ENCODE measurements at regions of chr16 and their contacts with region 1.

Region 1: GRCh38 chr16:65671-66137 is 6.7 kb downstream of the RHBDF1 start:
- DNase-seq: peak; percentile 89
- ATAC-seq: peak; percentile 92
- H3K4me3 Mint-ChIP-seq: no peak overlapping the region
- H3K27ac Mint-ChIP-seq: no peak overlapping the region
- H3K4me1 Mint-ChIP-seq: no peaks in the 10 kb centered on the region
- H3K27me3 Mint-ChIP-seq: peaks cover 8% of the 10 kb centered on the region

Region 2: DNA sequence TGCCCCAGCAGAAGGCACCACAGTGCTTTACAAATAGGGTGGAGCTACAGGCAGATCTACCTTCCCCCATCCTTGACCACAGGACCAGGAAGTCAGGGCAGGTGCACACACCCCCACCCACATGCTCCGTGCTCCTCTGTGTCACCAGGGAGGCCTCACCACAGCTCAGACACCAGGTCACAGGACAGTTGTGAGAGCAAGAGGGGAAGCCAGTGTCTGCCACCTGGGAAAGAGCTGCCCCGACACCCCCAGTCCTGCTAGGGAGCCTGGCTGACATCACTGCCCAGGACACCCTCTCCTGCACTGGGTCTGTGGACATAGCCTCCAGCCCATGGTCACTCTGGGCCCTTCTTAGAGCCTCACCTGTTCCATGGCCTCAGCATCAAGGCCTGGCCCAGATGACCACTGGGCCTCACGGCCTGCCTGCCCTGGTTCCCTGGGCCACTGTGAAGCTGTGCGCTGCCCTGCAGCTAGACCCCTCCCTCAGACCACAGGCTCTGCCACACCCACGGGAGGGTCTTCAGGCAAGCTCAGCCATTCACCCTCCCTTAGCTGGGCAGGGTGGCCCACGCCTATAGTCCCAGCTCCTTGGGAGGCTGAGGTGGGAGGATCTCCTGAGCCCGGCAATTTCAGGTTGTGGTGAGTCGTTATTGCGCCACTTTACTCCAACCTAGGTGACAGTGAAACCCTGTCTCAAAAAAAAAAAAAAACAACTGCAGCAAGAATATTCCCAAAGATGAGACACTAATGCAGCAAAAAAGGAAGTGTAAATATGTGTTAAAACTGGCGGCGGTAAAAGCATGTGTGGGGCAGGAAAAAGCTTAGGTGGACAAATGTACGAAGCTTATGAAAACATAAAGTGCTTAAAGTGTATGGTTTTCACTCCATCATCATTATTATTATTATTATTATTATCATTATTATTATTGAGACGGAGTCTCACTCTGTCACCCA is 26.5 kb before region 1 on chr16:
- CTCF ChIA-PET with region 1: interaction called, 18 read pairs
- DNase-seq: peak; percentile 84
- ATAC-seq: peak; percentile 88
- H3K4me3 Mint-ChIP-seq: no peak overlapping the region
- H3K27ac Mint-ChIP-seq: peak overlapping the region; percentile 58
- H3K4me1 Mint-ChIP-seq: peaks cover 32% of the 10 kb centered on the region
- H3K27me3 Mint-ChIP-seq: no peaks in the 10 kb centered on the region

Region 3: DNA sequence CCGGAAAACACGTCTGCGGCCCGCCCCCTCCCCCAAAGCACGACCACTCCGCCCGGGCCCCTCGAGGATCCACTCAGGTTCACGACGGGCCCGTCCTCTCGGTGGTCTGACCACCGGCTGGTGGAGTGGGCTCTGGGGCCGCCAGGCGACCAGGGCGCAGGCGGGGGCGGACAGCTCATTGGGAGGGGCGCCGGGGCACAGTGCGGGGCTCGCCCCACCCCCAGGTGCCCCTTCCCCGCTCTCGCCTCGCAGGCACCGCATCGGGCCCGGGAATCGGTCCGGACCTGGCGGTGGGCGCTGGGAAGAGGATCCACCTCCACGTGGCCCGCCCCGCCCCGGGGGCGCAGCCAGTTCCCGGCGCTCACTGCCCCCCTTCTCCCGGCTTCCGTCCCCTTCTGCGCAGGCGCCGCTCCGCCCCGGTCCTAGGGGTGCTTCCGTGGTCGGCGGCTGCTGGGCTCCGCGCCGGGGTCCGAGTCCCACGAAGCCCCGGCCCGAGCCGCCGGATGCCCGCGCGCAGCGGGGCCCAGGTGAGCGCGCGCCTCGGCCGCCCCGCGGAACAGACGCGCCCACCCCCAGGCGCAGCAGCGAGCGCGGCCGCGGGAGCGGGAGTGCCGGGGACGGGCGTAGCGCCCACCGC is 12.2 kb after region 1 on chr16 and contains the start of gene MPG:
- CTCF ChIA-PET with region 1: interaction called, 78 read pairs
- DNase-seq: peak; percentile 88
- ATAC-seq: peak; percentile 85
- H3K4me3 Mint-ChIP-seq: peak within 1 kb of the TSS; percentile 86
- H3K27ac Mint-ChIP-seq: peak within 1 kb of the TSS; percentile 86
- H3K4me1 Mint-ChIP-seq: peaks cover 28% of the 10 kb centered on the region
- H3K27me3 Mint-ChIP-seq: peaks cover 19% of the 10 kb centered on the region
- total RNA-seq, gene MPG: 60.2 to 60.6 TPM

Region 4: GRCh38 chr16:91484-91883 is 25.8 kb after region 1 on chr16:
- CTCF ChIA-PET with region 1: interaction called, 350 read pairs
- DNase-seq: no peak
- ATAC-seq: no peak
- H3K4me3 Mint-ChIP-seq: no peak overlapping the region
- H3K27ac Mint-ChIP-seq: no peak overlapping the region
- H3K4me1 Mint-ChIP-seq: no peaks in the 10 kb centered on the region
- H3K27me3 Mint-ChIP-seq: no peaks in the 10 kb centered on the region

Region 5: GRCh38 chr16:106623-107324 is 41.1 kb after region 1 on chr16:
- CTCF ChIA-PET with region 1: interaction called, 52 read pairs
- DNase-seq: peak; percentile 68
- ATAC-seq: peak; percentile 87
- H3K4me3 Mint-ChIP-seq: no peak overlapping the region
- H3K27ac Mint-ChIP-seq: no peak overlapping the region
- H3K4me1 Mint-ChIP-seq: peaks cover 2% of the 10 kb centered on the region
- H3K27me3 Mint-ChIP-seq: no peaks in the 10 kb centered on the region

Region 6: GRCh38 chr16:361872-362701 is 296.4 kb after region 1 on chr16:
- CTCF ChIA-PET with region 1: interaction called, 12 read pairs
- DNase-seq: peak; percentile 79
- ATAC-seq: peak; percentile 92
- H3K4me3 Mint-ChIP-seq: no peak overlapping the region
- H3K27ac Mint-ChIP-seq: no peak overlapping the region
- H3K4me1 Mint-ChIP-seq: peaks cover 4% of the 10 kb centered on the region
- H3K27me3 Mint-ChIP-seq: peaks cover 5% of the 10 kb centered on the region

Measured in activated CD8-positive, alpha-beta memory T cell treated with anti-CD3 and anti-CD28 coated beads, Interleukin-2, amount 10 ng/mL, durations not matched to agents 7 days and 5 days (primary cell).